HepG2 (cell line): ENCODE measurements at regions of chr1 and their contacts with region 1.

Region 1: DNA sequence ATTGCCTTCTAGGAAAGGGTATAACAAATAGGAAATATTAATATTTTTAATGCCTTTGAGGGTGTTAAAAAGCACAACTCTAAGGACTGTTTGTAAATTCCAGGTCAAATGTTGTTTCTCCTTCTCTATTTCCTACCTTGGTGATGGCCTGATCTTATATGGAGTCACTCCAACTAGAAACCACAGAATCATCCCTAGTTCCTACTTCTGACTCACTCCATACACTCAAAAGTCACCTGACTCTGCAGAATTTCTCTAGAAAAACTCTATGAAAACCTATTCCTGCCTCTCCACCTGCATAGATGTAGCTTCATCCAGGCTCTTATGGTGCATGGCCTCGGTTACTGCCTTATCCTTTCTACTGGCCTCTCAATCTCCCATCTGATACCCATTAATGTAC is 14.5 kb downstream of the RGS4 start:
- DNase-seq: no peak
- ATAC-seq: no peak
- H3K4me3 ChIP-seq: no peak overlapping the region
- H3K27ac ChIP-seq: no peak overlapping the region
- H3K4me1 ChIP-seq: no peaks in the 10 kb centered on the region
- H3K27me3 ChIP-seq: no peaks in the 10 kb centered on the region; a peak in 1 of 5 replicates
- CTCF ChIP-seq: no peak
- EP300 ChIP-seq: no peak
- POLR2A ChIP-seq: no peak
- RAD21 ChIP-seq: no peak

Region 2: GRCh38 chr1:162670928-162671663 is 412.6 kb before region 1 on chr1:
- CTCF ChIA-PET with region 1: no interaction called
- POLR2A ChIA-PET with region 1: no interaction called
- in situ Hi-C with region 1: no loop called
- intact Hi-C with region 1: loop called (anchors 5 kb)
- DNase-seq: no peak
- ATAC-seq: no peak
- H3K4me3 ChIP-seq: no peak overlapping the region
- H3K27ac ChIP-seq: no peak overlapping the region
- H3K4me1 ChIP-seq: no peaks in the 10 kb centered on the region
- H3K27me3 ChIP-seq: no peaks in the 10 kb centered on the region; a peak in 1 of 5 replicates
- CTCF ChIP-seq: no peak
- EP300 ChIP-seq: no peak
- POLR2A ChIP-seq: no peak
- RAD21 ChIP-seq: no peak

Region 3: GRCh38 chr1:163202833-163203451 is 119.3 kb after region 1 on chr1 and contains the start of gene RGS5:
- CTCF ChIA-PET with region 1: no interaction called
- POLR2A ChIA-PET with region 1: no interaction called
- in situ Hi-C with region 1: no loop called
- intact Hi-C with region 1: no loop called
- DNase-seq: no peak
- ATAC-seq: no peak
- H3K4me3 ChIP-seq: no peak within 1 kb of the TSS
- H3K27ac ChIP-seq: no peak within 1 kb of the TSS
- H3K4me1 ChIP-seq: no peaks in the 10 kb centered on the region
- H3K27me3 ChIP-seq: no peaks in the 10 kb centered on the region
- CTCF ChIP-seq: no peak
- EP300 ChIP-seq: no peak
- POLR2A ChIP-seq: no peak
- RAD21 ChIP-seq: no peak
- total RNA-seq, gene RGS5: 2.3 and 3.2 TPM in 2 replicates